Left cardiac atrium (tissue), 4 donors: ENCODE measurements at regions of chr12 and their contacts with region 1.

Region 1: DNA sequence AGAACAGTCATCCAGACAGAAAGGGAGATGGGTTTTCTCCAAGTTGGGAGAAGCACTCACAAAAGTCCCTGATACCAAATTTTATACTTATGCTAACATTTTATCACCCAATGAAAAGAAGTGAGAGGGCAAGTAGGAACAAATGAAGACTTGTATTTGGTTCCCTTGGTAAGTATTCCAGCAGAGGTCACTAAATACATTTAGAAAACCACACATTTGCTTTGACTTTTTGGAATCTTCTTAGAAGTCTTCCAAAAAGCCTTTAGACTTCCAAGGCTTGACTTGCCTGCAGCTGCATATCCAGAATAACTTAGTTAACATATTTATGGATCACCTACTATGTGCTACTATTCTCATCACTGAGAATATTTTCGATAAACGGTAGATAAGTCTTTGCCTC is 3.1 kb upstream of the GYS2 start:
- DNase-seq: no peak
- ATAC-seq: peak in 1 of 2 donors; percentile 55

Region 2: GRCh38 chr12:21265932-21266331 is 341.8 kb before region 1 on chr12:
- intact Hi-C with region 1: no loop called
- DNase-seq: no peak
- ATAC-seq: no peak

Region 3: DNA sequence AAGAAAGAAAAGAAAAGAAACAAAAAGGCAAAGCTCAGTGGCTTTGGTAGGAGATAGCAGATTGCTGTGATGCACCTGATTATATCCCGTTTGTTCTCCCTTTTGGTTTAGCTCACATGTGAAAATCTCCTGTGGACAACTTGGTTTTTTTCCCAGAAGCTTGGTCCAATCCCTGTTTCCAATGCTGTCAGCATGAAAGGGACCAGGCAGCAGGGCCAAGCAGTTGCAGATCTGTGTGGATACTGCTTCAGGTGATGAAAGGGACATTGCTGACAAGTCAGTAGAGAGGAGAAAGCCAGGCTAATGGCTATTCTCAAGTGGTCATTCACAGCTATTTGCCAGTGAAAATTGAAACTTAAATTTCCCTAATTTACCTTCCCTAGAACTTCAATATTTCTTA is 254.2 kb before region 1 on chr12:
- intact Hi-C with region 1: no loop called
- DNase-seq: no peak
- ATAC-seq: no peak

Region 4: DNA sequence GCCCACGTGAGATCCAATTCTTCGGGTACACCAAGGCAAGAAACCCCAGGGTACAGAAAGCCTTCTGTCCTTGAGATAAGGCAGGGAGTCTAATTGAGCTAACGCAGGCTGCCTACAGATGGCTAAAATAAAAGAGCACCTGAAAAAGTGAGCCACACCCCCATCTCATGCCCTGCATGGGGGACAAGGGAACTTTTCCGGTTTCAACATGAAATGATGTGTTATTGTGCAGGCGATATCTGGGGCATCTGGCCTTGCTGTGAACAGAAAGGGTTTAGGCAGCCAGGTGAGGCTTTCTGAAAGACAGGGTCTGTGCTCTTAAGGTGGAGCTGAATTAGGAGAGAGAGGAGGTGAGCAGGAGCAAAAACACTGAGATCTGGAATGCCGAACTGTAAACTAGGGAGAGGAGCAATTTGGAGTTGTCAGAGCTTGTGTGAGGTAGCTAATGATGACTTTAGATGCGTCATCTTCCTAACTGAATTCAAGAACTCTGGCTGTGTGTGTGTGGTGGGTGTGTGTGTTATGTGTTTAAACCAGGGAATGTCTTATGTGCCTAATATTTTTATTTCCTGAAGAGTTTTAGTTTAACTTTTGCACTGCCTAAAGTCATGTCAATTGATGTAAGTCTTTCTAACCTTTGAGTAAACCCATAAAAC is 70.0 kb after region 1 on chr12:
- intact Hi-C with region 1: loop called (anchors 2 to 5 kb)
- DNase-seq: no peak
- ATAC-seq: no peak

Region 5: GRCh38 chr12:21683115-21683514 is 75.4 kb after region 1 on chr12:
- intact Hi-C with region 1: loop called (anchors 2 to 5 kb)
- DNase-seq: no peak
- ATAC-seq: peak; percentile 58 to 85